ENCODE measurements at regions of chr9 and their contacts with region 1.

Region 1: GRCh38 chr9:120936011-120936763 is 9.6 kb upstream of the TRAF1 start:
- H3K4me3 ChIP-seq: no peak overlapping the region
- H3K27ac ChIP-seq: no peak overlapping the region; the same call in 1 of the 2 replicates
- H3K4me1 ChIP-seq: no peaks in the 10 kb centered on the region; the same call in 1 of the 2 replicates
- CTCF ChIP-seq: peak; percentile 51; the same call in 1 of the 2 replicates

Region 2: DNA sequence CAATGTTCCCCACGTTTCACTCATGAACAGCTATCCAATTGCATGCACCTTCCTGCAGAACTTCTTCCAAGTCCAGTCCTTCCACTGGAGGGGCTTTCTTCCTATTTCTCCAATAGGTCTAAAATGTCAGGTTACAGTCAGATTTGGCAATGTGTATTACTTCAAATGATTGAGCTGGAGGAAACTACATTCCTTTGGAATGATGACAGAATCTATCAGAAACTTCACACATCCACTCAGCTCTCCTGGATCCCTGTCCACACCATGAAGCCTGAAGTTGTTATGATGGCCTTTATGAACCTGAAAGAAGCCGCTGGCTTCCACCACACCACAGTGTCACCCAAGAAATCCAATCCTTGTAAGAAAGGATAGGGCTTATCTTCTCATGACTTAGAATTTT is 175.2 kb before region 1 on chr9:
- CTCF ChIA-PET with region 1: interaction called, 52 read pairs
- POLR2A ChIA-PET with region 1: no interaction called
- H3K4me3 ChIP-seq: no peak overlapping the region
- H3K27ac ChIP-seq: no peak overlapping the region
- H3K4me1 ChIP-seq: no peaks in the 10 kb centered on the region
- CTCF ChIP-seq: no peak

Measured in HEK293 (cell line).